ENCODE measurements at regions of chr18 and their contacts with region 1.

Region 1: DNA sequence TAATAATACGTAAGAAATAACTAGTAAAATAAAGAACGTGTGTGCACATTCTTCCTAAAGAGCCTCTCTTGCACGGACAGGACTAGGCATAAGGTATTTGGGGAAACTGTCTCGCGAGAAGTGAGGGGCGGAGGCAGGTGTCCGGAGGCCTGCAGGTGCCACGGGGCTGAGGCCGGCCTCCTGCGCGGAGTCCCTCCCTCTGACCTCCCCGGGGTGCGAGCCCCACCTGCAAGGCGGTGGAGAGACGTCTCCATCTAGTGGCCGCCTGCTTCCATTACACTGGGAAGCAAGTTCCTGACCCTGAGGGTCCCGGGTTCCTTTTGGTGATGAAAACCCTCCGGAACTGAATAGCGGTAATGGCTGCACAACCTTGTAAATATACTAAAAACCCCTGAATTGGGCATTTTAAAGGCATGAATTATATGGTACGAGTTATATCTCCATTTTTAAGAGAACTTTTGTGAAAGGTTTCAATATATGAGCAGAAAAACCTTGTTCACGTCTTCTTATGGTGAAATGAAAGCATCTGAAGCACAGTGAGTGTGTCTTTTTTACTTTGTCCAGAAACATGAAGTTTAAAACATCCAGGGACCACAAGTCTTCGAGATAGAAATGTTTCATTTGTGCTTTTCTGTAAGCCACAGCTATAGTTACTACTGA is 35.5 kb upstream of the CTDP1 start:
- DNase-seq: peak; percentile 64 to 86 (median 85)
- ATAC-seq: peak; percentile 73 to 83
- H3K4me3 ChIP-seq: no peak overlapping the region
- H3K27ac ChIP-seq: no peak overlapping the region
- H3K4me1 ChIP-seq: no peaks in the 10 kb centered on the region
- H3K27me3 ChIP-seq: no peaks in the 10 kb centered on the region

Region 2: DNA sequence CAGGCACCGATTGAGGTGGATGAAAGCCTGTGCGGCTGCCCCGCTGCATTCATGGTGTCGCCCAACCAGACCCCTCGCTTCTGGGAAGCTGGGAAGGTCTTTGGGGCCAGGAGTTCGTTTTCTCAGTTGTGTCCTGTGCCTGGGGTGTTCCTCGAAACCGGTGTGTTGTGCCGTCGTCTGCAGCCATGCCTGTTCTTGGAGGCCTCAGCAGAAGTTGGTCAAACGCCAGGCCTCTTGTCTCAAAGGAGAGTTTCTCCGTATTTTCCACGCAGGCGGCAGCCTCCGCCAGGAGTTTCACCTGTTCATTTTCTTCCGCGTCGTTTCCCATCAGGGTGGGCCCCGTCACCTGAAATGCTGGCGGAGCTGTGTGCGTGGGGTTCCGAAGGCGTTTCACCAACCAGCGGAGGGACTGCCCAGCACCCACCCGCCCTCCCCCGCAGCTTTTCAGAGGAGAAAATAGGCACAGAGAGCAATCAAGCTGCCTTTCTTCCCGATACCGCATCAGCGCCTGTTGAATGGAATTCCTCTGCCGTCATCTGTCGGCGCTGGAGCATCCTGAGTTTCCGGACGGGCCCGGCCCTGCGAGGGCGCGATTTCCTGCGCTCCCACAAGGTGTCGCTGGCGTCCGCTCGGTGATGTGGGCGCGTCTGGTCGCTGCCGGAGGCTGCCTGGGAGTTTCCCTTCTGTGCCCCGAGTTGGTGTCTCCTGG is 265.4 kb before region 1 on chr18:
- intact Hi-C with region 1: loop called in 3 of 4 experiments (anchors 1 to 2 kb)
- DNase-seq: peak; percentile 72 to 92 (median 91)
- ATAC-seq: peak; percentile 78 to 82
- H3K4me3 ChIP-seq: no peak overlapping the region
- H3K27ac ChIP-seq: no peak overlapping the region
- H3K4me1 ChIP-seq: no peaks in the 10 kb centered on the region
- H3K27me3 ChIP-seq: no peaks in the 10 kb centered on the region

Region 3: GRCh38 chr18:79458131-79458838 is 185.9 kb before region 1 on chr18:
- intact Hi-C with region 1: no loop called
- DNase-seq: peak; percentile 89 to 94 (median 90)
- ATAC-seq: peak; percentile 89 to 90
- H3K4me3 ChIP-seq: no peak overlapping the region
- H3K27ac ChIP-seq: peak overlapping the region; percentile 59
- H3K4me1 ChIP-seq: peaks cover 8% of the 10 kb centered on the region
- H3K27me3 ChIP-seq: no peaks in the 10 kb centered on the region

Region 4: DNA sequence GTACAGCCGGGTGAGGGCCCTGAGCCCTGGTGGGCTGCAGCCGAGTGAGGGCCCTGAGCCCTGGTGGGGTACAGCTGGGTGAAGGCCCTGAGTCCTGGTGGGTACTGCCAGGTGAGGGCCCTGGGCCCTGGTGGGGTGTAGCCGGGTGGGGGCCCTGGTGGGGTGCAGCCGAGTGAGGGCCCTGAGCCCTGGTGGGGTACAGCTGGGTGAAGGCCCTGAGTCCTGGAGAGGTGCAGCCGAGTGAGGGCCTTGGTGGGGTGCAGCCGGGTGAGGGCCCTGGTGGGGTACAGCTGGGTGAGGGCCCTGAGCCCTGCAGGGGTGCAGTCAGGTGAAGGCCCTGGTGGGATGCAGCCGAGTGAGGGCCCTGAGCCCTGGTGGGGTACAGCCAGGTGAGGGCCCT is 72.9 kb after region 1 on chr18:
- intact Hi-C with region 1: no loop called
- DNase-seq: no peak
- ATAC-seq: no peak
- H3K4me3 ChIP-seq: no peak overlapping the region
- H3K27ac ChIP-seq: no peak overlapping the region
- H3K4me1 ChIP-seq: no peaks in the 10 kb centered on the region
- H3K27me3 ChIP-seq: no peaks in the 10 kb centered on the region

Measured in right cardiac atrium (tissue), 5 donors.